Mammary epithelial cell (primary cell): ENCODE measurements at regions of chr2 and their contacts with region 1.

Region 1: GRCh38 chr2:215758691-215759090 is 254.7 kb downstream of the MREG start:
- DNase-seq: no peak
- H3K4me3 ChIP-seq: no peak overlapping the region
- H3K27ac ChIP-seq: no peak overlapping the region
- H3K4me1 ChIP-seq: peaks cover 4% of the 10 kb centered on the region
- H3K27me3 ChIP-seq: no peaks in the 10 kb centered on the region
- CTCF ChIP-seq: no peak

Region 2: DNA sequence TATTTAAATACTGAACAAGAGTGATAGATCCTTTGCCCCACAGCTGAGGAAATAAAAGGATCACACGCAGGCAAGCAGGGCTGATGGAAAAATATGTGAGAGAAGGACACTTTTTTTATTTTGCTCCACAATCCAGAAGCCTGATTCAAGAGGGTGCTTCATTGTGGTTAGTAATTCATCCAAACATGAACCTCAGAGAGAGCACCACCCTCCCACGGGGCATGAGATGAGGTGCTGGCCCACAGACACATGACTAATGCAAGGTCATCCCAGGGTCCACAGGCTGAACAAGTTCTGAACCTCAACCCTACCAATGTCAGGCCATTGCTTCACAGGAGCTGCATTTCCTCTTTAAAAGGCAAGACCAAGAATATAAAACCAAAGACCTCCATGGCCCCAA is 15.0 kb after region 1 on chr2:
- CTCF ChIA-PET with region 1: no interaction called
- dilution Hi-C with region 1: no loop called
- in situ Hi-C with region 1: no loop called
- intact Hi-C with region 1: no loop called
- DNase-seq: peak; percentile 93
- H3K4me3 ChIP-seq: no peak overlapping the region
- H3K27ac ChIP-seq: peak overlapping the region; percentile 46
- H3K4me1 ChIP-seq: peaks cover 26% of the 10 kb centered on the region
- H3K27me3 ChIP-seq: no peaks in the 10 kb centered on the region
- CTCF ChIP-seq: no peak

Region 3: DNA sequence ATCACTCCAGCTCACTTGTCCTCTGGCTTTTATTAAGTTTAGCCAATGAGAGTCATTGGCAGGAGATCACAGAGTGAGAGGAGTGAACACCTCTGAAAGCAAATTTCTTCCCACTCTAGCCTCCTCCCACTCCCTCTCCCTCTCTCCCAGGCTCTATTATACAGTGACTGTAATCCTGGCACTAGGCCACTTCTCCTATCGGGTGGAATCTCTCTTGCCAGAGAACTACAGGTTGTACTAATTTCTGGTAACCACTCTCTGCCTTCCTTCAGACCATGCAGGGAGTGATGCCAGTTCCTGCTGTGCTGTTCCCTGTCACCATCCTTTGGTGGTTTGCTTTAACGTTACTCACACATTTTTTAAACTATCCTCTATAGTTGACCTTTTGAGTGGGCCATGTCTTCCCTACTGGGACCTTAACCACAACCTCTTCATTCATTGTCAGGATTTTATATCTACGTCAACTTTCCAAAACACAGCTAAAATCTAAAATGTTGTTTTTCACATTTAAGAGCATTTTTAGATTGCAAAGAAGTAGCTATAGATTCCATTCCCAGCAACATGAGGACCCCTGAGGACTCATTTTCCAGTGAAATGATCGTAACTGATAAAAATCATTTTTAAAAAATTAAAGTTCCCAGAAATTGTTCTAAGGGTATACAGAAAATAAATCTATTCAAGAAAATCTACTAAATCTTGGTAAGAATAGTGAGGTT is 37.6 kb after region 1 on chr2:
- CTCF ChIA-PET with region 1: no interaction called
- dilution Hi-C with region 1: no loop called
- in situ Hi-C with region 1: no loop called
- intact Hi-C with region 1: loop called (anchors 5 kb)
- DNase-seq: peak; percentile 79
- H3K4me3 ChIP-seq: no peak overlapping the region
- H3K27ac ChIP-seq: no peak overlapping the region
- H3K4me1 ChIP-seq: peaks cover 40% of the 10 kb centered on the region
- H3K27me3 ChIP-seq: no peaks in the 10 kb centered on the region
- CTCF ChIP-seq: peak in 1 of 2 donors; percentile 1

Region 4: DNA sequence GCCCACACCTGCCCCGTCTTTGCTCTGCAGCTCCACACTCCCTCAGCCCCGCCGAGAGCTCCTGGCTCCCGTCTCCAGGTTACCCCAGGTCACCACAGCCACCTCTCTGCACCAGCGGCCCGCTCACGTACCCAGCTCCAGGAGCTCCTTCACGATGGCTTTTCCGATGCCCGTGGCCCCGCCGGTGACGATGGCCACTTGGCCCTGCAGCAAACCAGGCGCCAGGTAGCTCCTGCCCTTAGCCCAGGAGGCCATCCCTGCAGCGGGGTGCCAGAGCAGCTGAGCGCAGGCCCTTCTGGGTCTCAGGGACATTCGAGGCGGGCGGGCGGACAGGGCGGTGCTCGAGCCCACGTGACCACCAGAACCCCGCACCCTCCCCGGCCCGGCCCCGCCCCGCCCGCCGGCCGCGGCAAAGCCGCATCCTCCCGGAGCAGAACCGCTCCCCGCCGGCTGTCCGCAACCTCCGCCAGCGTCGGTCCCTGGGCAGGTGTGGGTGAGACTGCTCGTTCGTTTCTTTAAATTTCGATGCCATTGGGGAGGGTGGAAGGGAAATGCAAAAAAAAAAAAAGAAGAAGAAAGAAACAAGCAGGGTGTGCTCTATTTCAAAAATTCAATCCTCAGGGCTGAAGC is 322.9 kb after region 1 on chr2 and contains the starts of genes PECR and TMEM169:
- CTCF ChIA-PET with region 1: no interaction called
- dilution Hi-C with region 1: no loop called
- in situ Hi-C with region 1: no loop called
- intact Hi-C with region 1: no loop called
- DNase-seq: peak; percentile 71
- H3K4me3 ChIP-seq: peak within 1 kb of the TSS; percentile 85 to 90 (median 90)
- H3K27ac ChIP-seq: no peak within 1 kb of the TSS
- H3K4me1 ChIP-seq: peaks cover 24% of the 10 kb centered on the region
- H3K27me3 ChIP-seq: no peaks in the 10 kb centered on the region
- CTCF ChIP-seq: no peak
- total RNA-seq, gene PECR: 8.8 to 11.2 TPM
- total RNA-seq, gene TMEM169: 0.24 to 1.8 TPM